ENCODE measurements at regions of chr12 and their contacts with region 1.

Region 1: DNA sequence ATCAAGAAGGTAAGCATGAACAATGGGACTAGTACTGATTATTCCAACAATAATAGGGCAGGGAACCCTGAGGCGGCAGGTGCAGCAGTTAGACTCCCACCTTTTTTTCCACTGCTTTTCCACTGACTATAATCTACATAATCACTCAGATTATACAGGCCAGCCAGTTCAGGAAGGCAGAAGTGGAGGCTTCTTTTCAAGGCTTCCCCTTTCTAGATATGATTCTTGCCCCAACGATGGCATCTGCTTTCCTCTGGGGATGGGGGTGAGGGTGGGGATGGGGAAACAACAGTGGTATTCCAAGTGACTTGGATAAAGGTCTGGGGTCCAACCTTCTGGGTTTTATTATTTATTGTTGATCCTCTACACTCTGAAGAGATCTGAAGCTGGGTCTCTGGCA is 331 bp downstream of the NCKAP1L start:
- DNase-seq: no peak
- ATAC-seq: peak; percentile 3
- H3K4me3 ChIP-seq: peak overlapping the region; percentile 76 to 97 (median 93)
- H3K4me3 Mint-ChIP-seq: peak overlapping the region; percentile 100
- H3K27ac ChIP-seq: peak overlapping the region; percentile 46 to 80
- H3K27ac Mint-ChIP-seq: peak overlapping the region; percentile 99
- H3K4me1 ChIP-seq: peaks cover 31 to 35% of the 10 kb centered on the region in 2 donors
- H3K4me1 Mint-ChIP-seq: peaks cover 46% of the 10 kb centered on the region
- H3K27me3 ChIP-seq: no peaks in the 10 kb centered on the region
- H3K27me3 Mint-ChIP-seq: no peaks in the 10 kb centered on the region
- CTCF ChIP-seq: no peak

Region 2: DNA sequence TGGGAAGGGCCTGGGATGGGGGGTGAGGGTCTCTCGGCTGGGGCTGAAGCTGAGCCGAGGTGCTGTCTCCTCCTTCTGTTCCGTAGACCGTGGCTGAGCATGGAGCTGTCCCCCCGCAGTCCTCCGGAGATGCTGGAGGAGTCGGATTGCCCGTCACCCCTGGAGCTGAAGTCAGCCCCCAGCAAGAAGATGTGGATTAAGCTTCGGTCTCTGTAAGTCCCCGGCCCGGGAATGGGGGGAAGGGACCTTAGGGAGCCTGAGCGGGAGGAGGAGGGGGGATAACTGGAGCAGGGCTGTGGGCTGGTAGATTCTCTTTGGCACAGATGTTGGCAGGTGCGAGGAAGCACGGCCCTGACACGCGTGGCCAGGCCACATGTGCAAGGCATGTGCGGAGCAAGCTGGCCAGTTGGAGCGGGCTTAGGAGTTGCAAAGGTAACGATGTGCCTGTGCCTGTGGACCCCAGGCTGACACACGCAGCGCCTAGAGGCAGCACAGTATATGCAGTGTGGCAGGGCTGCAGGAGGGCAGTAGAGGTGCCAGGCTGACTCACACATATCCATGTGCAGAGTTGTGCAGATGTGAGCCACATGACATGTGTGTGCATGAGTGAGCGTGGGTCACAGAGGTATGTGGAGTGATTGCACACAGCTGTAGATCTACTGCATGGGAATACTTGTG is 52.0 kb after region 1 on chr12:
- CTCF ChIA-PET with region 1: no interaction called
- POLR2A ChIA-PET with region 1: no interaction called
- intact Hi-C with region 1: loop called (anchors 10 kb)
- DNase-seq: peak; percentile 39
- ATAC-seq: peak; percentile 59
- H3K4me3 ChIP-seq: peak overlapping the region in 4 of 5 experiments; percentile 32 to 54 (median 50)
- H3K4me3 Mint-ChIP-seq: peak overlapping the region; percentile 85
- H3K27ac ChIP-seq: no peak overlapping the region
- H3K27ac Mint-ChIP-seq: peak overlapping the region; percentile 47
- H3K4me1 ChIP-seq: peaks cover 17 to 20% of the 10 kb centered on the region in 2 donors
- H3K4me1 Mint-ChIP-seq: peaks cover 26% of the 10 kb centered on the region
- H3K27me3 ChIP-seq: peaks cover 0 to 13% (median 6%) of the 10 kb centered on the region in 4 experiments
- H3K27me3 Mint-ChIP-seq: peaks cover 8% of the 10 kb centered on the region
- CTCF ChIP-seq: no peak

Measured in B cell (primary cell).